IMR-90 (cell line): ENCODE measurements at regions of chr17 and their contacts with region 1.

Region 1: DNA sequence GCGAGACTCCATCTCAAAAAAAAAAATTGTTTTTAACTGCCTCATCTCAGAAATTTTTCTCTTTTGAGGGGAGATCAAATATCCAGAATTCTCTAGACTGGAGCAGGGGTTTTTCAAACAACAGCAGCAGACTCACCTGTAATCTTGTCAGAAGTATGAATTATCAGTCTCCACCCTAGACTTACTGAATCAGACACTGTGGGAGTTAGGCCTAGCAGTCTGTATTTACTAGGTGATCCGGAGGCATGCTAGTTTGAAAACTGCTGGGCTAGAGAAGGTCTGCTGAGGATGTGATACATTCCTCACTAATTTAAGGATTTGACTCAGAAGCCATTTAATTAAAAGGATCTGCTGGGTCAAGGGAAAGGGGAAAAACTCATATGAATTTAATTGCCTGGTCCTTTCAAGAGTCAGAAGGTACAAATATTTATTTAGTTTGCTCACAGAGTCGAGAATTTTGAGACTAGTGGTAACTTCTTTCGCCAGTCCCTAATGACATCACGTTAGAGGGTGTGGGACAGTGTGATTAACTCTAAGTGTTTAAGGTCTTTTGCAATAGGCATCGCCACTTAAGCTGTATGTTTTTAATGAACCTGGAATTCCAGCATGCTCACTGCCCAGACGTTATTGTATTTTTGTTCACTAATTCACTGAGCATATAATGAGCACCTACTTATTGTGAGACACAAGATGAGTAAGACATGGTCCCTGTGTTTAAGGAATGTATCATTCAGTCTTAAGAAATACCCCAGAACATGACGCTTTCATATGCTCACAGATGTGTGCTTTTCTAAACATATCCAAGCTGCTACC is 14.2 kb downstream of the ATP6V0A1 start:
- DNase-seq: peak; percentile 93
- ATAC-seq: peak; percentile 83
- H3K4me3 ChIP-seq: no peak overlapping the region
- H3K27ac ChIP-seq: no peak overlapping the region
- H3K4me1 ChIP-seq: peaks cover 2% of the 10 kb centered on the region
- H3K27me3 ChIP-seq: no peaks in the 10 kb centered on the region
- CTCF ChIP-seq: no peak
- POLR2A ChIP-seq: no peak
- RAD21 ChIP-seq: no peak

Region 2: GRCh38 chr17:42388381-42389134 is 84.4 kb before region 1 on chr17 and contains the start of gene STAT3:
- CTCF ChIA-PET with region 1: no interaction called
- POLR2A ChIA-PET with region 1: no interaction called
- dilution Hi-C with region 1: no loop called
- in situ Hi-C with region 1: no loop called
- intact Hi-C with region 1: no loop called
- DNase-seq: peak; percentile 100
- ATAC-seq: peak; percentile 97
- H3K4me3 ChIP-seq: peak within 1 kb of the TSS; percentile 99
- H3K27ac ChIP-seq: peak within 1 kb of the TSS; percentile 92
- H3K4me1 ChIP-seq: peaks cover 6% of the 10 kb centered on the region
- H3K27me3 ChIP-seq: no peaks in the 10 kb centered on the region
- CTCF ChIP-seq: no peak; the same call in 1 of the 2 replicates
- POLR2A ChIP-seq: peak; percentile 79
- RAD21 ChIP-seq: peak; percentile 26; the same call in 1 of the 2 replicates
- total RNA-seq, gene STAT3: 61.9 and 66.3 TPM in 2 replicates

Region 3: DNA sequence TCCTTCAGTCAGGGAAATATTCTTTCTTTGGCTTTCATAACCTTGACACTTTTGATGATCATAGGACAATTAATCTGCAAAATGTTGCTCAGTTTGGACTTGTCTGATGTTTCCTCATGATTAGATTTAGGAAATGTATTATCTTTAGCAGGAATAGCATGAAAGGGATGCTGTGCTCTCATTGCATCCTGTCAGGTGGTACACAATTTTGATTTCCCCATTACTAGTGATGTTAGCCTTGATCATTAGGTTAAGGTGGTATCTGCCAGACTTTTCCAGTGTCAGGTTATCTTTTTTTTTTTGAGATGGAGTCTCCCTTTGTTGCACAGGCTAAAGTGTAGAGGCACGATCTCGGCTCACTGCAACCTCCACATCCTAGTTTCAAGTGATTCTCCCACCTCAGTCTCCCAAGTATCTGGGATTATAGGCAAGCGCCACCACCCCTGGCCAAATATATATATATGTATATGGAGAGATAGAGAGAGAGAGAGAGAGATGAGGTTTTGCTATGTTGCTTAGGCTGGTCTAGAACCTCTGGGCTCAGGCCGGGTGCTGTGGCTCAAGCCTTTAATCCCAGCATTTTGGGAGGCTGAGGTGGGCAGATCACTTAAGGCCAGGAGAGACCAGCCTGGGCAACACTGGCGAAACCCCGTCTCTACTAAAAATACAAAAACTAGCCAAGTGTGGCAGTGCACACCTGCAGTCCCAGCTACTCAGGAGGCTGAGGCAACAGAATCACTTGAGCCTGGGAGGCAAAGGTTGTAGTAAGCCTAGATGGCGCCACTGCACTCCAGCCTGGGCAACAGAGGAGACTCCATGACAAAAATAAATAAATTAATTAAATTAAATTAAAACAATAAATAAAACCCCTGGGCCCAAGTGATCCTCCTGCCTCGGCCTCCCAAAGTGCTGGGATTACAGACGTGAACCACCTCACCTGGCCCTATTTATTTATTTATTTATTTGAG is 34.0 kb before region 1 on chr17:
- CTCF ChIA-PET with region 1: no interaction called
- POLR2A ChIA-PET with region 1: no interaction called
- dilution Hi-C with region 1: no loop called
- in situ Hi-C with region 1: no loop called
- intact Hi-C with region 1: loop called (anchors 5 kb)
- DNase-seq: no peak
- ATAC-seq: no peak
- H3K4me3 ChIP-seq: no peak overlapping the region
- H3K27ac ChIP-seq: no peak overlapping the region
- H3K4me1 ChIP-seq: no peaks in the 10 kb centered on the region; the same call in 1 of the 2 replicates
- H3K27me3 ChIP-seq: no peaks in the 10 kb centered on the region
- CTCF ChIP-seq: peak; percentile 34; the same call in 1 of the 2 replicates
- POLR2A ChIP-seq: no peak
- RAD21 ChIP-seq: 0 out of 2 replicates have a peak, but pooled peaks have one; percentile 9

Region 4: GRCh38 chr17:42493319-42493718 is 20.4 kb after region 1 on chr17:
- CTCF ChIA-PET with region 1: no interaction called
- POLR2A ChIA-PET with region 1: no interaction called
- dilution Hi-C with region 1: no loop called
- in situ Hi-C with region 1: no loop called
- intact Hi-C with region 1: no loop called
- DNase-seq: no peak
- ATAC-seq: no peak
- H3K4me3 ChIP-seq: no peak overlapping the region
- H3K27ac ChIP-seq: no peak overlapping the region
- H3K4me1 ChIP-seq: no peaks in the 10 kb centered on the region
- H3K27me3 ChIP-seq: no peaks in the 10 kb centered on the region
- CTCF ChIP-seq: no peak
- POLR2A ChIP-seq: no peak
- RAD21 ChIP-seq: no peak

Region 5: DNA sequence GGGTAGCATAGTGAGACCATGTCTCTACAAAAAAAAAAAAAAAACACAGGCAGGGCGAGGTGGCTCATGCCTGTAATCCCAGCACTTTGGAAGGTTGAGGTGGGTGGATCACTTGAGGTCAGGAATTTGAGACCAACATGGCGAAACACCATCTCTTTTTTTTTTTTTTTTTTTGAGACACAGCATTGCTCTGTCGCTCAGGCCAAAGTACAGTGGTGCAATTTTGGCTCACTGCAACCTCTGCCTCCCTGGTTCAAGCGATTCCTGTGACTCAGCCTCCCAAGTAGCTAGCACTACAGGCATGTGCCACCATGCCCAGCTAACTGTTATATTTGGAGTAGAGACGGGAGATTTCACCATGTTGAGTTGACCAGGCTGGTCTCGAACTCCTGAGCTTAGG is 293.2 kb after region 1 on chr17:
- CTCF ChIA-PET with region 1: no interaction called
- POLR2A ChIA-PET with region 1: no interaction called
- dilution Hi-C with region 1: no loop called
- in situ Hi-C with region 1: no loop called
- intact Hi-C with region 1: no loop called
- DNase-seq: no peak
- ATAC-seq: no peak
- H3K4me3 ChIP-seq: no peak overlapping the region
- H3K27ac ChIP-seq: no peak overlapping the region
- H3K4me1 ChIP-seq: no peaks in the 10 kb centered on the region
- H3K27me3 ChIP-seq: peaks cover 15% of the 10 kb centered on the region; the same call in 1 of the 2 replicates
- CTCF ChIP-seq: no peak
- POLR2A ChIP-seq: no peak
- RAD21 ChIP-seq: no peak